ENCODE measurements at regions of chr4 and their contacts with region 1.

Region 1: DNA sequence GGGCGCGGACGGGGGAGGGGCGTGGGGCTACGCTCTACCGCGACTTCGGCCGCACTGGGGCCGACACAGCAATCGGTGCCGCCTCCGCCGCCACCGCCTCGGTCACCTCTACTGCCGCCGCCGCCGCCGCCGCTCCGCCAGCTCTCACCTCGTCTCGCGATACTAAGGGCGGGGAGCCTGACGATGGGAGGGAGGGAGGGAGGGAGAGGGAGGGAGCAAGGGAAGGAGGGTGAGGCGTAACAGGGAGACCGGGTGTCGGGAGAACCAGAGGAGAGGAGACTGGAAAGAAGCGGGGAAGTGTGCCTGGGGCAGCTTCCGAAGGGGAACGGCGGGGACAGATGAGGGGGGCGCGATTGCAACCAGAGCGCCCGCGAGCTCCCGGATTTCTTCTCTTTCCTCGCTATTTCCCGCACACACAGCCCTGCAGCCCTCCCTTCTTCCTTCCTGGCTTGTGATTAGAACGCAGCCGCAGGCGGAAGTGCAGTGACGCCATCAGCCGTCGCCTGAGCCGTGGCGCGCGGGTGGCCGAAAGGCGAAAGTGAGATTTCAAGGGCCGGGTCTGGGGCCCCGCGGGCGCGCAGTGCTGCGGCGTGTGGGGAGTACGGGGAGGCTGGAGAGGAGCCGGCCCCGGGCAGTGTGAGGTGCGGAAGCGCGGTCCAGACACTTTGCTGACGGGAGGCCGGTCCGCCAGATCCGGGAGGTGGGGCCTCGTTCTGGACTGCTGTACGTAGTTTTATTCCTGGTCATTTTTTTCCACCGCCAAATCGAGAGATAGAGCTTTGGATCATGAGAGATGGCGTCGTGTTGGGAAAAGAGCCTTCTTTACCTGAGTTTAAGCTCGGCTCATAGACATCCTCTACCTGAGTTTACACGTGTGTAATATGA is at the start of gene ANKRD17:
- DNase-seq: peak; percentile 56 to 90
- ATAC-seq: peak; percentile 87 to 91
- H3K4me3 ChIP-seq: peak within 1 kb of the TSS; percentile 74
- H3K27ac ChIP-seq: peak within 1 kb of the TSS; percentile 99 to 100
- H3K4me1 ChIP-seq: peaks cover 23% of the 10 kb centered on the region; the same call in 2 of the 3 replicates
- CTCF ChIP-seq: no peak; the same call in 2 of the 3 replicates
- EP300 ChIP-seq: no peak
- POLR2A ChIP-seq: peak; percentile 53
- RAD21 ChIP-seq: no peak
- polyA plus RNA-seq, gene ANKRD17: 43.5 and 46.3 TPM in 2 replicates

Region 2: GRCh38 chr4:73222466-73223257 is 36.3 kb before region 1 on chr4:
- CTCF ChIA-PET with region 1: interaction called, 4 read pairs
- POLR2A ChIA-PET with region 1: interaction called, 10 read pairs
- DNase-seq: peak; percentile 65 to 89
- ATAC-seq: peak; percentile 100
- H3K4me3 ChIP-seq: peak overlapping the region; percentile 62
- H3K27ac ChIP-seq: peak overlapping the region; percentile 76 to 86
- H3K4me1 ChIP-seq: peaks cover 21% of the 10 kb centered on the region
- CTCF ChIP-seq: no peak
- EP300 ChIP-seq: no peak
- POLR2A ChIP-seq: no peak
- RAD21 ChIP-seq: no peak

Region 3: DNA sequence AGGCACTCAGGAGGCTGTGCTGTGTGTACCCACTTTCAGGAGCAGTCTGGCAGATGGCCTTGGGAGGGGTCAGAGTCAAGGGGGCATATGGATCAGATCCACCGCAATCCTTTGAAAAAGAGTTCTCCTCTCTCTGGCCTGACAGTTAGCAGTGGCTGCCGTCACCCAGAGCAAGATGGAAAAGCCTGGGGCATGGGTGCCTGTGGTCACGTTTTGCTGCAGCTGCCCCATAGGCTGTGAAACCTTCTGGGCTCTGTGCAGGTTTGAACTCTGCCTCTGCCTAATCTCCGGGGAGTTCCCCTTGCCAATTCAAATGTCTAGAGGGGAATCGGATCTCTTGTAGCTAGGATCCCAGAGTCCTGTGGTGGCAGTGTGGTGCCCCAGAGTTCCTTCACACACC is 23.0 kb after region 1 on chr4:
- CTCF ChIA-PET with region 1: no interaction called
- POLR2A ChIA-PET with region 1: no interaction called
- DNase-seq: no peak
- ATAC-seq: no peak
- H3K4me3 ChIP-seq: no peak overlapping the region
- H3K27ac ChIP-seq: no peak overlapping the region
- H3K4me1 ChIP-seq: no peaks in the 10 kb centered on the region
- CTCF ChIP-seq: no peak
- EP300 ChIP-seq: no peak
- POLR2A ChIP-seq: no peak
- RAD21 ChIP-seq: no peak

Region 4: DNA sequence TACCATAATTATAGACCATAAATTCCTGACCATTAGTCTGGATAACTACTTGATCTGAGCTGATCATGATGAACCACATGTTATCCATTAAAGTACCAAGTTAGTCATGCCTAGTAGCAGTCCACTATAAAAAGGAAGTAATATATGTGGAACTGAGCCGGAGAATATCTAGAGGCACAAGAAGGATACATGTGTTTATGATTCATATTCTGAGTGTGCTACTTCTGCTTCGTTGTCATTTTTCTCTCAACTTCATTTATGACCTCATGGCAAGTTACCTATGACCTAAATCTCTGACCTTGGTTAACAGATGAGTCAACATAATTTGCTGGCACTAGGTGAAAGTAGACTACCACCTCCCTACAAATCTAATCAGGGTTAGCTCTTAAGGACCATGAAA is 56.2 kb after region 1 on chr4:
- CTCF ChIA-PET with region 1: no interaction called
- POLR2A ChIA-PET with region 1: interaction called, 10 read pairs
- DNase-seq: no peak
- ATAC-seq: no peak
- H3K4me3 ChIP-seq: no peak overlapping the region
- H3K27ac ChIP-seq: no peak overlapping the region
- H3K4me1 ChIP-seq: no peaks in the 10 kb centered on the region; the same call in 2 of the 3 replicates
- CTCF ChIP-seq: no peak
- EP300 ChIP-seq: no peak
- POLR2A ChIP-seq: no peak
- RAD21 ChIP-seq: no peak